Aorta (tissue), 5 donors: ENCODE measurements at regions of chr17 and their contacts with region 1.

Region 1: GRCh38 chr17:58631523-58632323 is 60.1 kb downstream of the TEX14 start:
- DNase-seq: peak; percentile 97 to 98
- ATAC-seq: peak; percentile 97
- H3K4me3 ChIP-seq: peak overlapping the region; percentile 6 to 86
- H3K27ac ChIP-seq: peak overlapping the region; percentile 69 to 74
- H3K4me1 ChIP-seq: no peaks in the 10 kb centered on the region
- H3K27me3 ChIP-seq: peaks cover 0 to 2% of the 10 kb centered on the region in 2 donors

Region 2: DNA sequence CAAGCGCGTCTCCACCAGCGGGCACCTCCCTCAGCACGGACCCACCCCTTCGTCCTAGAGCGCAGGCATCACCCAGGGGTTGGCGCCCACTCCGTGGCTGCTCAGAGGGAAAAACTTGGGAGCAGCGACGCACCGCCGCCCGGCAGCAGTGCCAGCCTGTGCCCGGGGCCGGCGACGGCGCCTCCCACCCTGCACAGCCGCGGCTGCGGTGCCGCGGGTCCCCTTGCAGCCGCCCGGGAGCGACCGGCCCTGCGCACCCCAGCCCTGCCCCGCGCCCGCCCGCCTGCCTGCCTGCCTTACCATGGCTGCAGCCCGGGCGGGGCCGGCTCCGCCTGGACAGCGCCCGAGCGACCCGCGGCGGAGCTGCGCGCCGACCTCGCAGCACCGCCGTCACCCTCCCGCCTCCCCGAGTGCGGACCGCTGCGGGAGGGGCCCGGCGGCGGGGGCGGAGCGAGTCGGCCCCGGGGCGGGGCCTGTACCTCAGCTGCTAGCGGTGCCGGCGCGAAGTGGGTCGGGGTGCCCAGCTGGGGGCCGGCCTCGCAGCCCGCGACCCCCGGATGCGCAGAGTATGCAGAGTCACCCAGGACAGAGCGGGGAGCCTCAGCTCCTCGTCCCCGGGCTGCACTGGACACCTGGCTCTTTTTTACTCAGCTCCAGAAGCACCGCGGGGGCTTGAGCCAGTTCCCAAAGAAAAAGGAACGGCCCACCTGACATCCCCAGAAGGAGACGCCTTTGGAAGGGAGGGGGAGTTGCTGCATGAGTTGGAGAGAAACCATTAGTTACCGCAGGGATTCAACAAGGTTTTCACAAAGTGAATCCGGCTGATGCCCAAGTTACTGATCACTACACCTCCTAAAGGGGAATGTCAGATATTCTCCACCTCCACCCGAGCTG is 99.8 kb before region 1 on chr17:
- intact Hi-C with region 1: loop called in 1 of 2 experiments (anchors 5 kb)
- DNase-seq: peak; percentile 72 to 88
- ATAC-seq: peak; percentile 84
- H3K4me3 ChIP-seq: peak overlapping the region; percentile 69 to 78
- H3K27ac ChIP-seq: peak overlapping the region in 1 of 2 donors; percentile 65
- H3K4me1 ChIP-seq: no peaks in the 10 kb centered on the region
- H3K27me3 ChIP-seq: no peaks in the 10 kb centered on the region

Region 3: DNA sequence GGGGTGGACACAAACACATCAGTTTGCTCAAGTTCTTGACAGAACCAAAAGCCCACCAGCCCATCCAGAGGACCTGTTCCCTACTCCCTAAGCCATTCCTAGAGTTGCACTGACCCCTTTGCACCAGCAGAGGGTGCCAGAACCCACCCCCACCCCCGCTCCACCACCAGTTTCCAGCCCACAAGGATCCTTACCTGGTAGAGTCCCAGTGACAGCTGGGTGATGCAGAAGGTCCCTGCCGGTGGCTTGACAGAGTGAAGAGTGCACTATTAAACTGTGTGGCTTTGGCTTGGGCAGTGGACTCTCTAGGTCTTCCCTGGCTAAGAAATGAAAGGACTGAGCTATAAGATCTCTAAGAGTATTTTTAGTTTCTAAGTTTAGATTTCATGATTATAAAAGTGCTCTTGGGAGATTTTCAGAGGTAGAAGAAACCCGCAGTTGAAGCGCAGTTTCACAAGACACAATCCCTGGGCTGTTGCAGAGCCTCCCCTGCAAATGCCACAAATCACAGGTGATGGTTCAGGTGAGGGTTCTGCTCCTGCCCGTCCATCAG is 43.9 kb before region 1 on chr17:
- intact Hi-C with region 1: no loop called
- DNase-seq: peak; percentile 55 to 78
- ATAC-seq: peak; percentile 68
- H3K4me3 ChIP-seq: no peak overlapping the region
- H3K27ac ChIP-seq: no peak overlapping the region
- H3K4me1 ChIP-seq: no peaks in the 10 kb centered on the region
- H3K27me3 ChIP-seq: no peaks in the 10 kb centered on the region

Region 4: DNA sequence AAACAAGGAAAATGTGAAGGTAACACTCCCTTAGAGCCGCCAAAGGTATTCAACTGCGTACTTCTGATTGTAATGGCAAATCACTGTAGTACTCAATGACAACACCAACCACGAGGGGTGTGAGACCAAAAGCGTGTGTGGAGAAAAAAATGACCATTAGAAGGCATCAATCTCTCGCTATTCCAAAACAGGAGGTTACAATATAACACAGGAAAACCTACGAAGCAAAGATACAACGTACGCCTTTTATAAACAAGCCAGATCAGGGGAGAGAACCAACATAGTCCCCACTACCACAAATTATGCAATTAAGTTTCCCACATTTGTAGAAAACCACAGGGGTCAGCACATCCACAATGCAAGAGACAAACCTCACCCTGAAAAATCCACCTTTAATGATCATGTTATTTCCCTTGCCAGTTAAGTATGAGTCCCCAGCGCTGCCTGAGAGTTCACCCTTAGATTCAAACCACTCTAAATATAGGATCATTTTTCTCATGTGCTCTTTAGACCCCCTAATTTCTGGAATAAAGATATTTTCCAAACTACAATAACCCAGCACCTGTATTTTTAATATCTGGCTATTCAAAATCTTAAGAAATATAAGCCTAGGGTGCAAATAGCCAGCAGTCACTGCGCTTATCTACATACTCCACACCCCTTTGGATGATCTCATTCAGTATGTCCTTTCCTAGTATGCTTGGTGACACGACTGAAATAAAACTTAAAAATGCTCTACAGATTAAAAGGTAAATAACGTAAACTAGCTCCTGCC is 47.7 kb after region 1 on chr17:
- intact Hi-C with region 1: no loop called
- DNase-seq: no peak
- ATAC-seq: no peak
- H3K4me3 ChIP-seq: no peak overlapping the region
- H3K27ac ChIP-seq: no peak overlapping the region
- H3K4me1 ChIP-seq: no peaks in the 10 kb centered on the region
- H3K27me3 ChIP-seq: peaks cover 0 to 4% of the 10 kb centered on the region in 2 donors

Region 5: DNA sequence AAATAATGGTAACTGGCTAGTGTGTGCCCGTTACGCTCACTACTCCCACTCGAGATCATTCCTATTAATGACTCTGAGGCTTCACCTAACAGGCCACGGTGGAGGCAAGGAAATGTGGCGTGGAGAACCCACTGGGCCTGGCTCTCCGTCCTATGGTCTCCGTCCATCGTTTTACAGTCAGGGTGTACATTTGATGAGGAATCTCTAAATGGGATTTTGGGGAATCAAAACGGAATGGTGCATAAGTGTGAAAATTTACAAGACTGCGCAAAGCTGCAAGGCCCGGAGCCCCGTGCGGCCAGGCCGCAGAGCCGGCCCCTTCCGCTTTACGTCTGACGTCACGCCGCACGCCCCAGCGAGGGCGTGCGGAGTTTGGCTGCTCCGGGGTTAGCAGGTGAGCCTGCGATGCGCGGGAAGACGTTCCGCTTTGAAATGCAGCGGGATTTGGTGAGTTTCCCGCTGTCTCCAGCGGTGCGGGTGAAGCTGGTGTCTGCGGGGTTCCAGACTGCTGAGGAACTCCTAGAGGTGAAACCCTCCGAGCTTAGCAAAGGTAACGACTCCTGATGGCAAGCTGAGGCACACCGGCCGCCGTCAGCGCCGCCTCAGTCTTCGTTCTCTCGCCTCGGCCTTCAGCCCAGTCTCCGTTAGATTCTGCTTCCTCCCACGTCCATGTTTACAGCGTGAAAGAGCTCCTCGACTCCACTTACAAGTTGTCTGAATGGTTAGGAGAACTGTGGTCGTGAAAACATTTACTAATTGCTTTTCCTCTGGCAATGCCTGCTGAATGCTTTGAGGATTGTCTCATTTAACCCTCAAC is 60.7 kb after region 1 on chr17 and contains the start of gene RAD51C:
- intact Hi-C with region 1: loop called in 1 of 2 experiments (anchors 5 kb)
- DNase-seq: peak; percentile 92 to 93
- ATAC-seq: peak; percentile 96
- H3K4me3 ChIP-seq: peak within 1 kb of the TSS; percentile 36 to 73
- H3K27ac ChIP-seq: peak within 1 kb of the TSS; percentile 23 to 66
- H3K4me1 ChIP-seq: no peaks in the 10 kb centered on the region
- H3K27me3 ChIP-seq: no peaks in the 10 kb centered on the region
- total RNA-seq, gene RAD51C: 21.0 to 25.0 TPM